Cardiac septum (tissue), 1 donor: ENCODE measurements at regions of chr14 and their contacts with region 1.

Region 1: GRCh38 chr14:50003213-50004031 is 110.5 kb downstream of the ARF6 start:
- DNase-seq: peak; percentile 88

Region 2: DNA sequence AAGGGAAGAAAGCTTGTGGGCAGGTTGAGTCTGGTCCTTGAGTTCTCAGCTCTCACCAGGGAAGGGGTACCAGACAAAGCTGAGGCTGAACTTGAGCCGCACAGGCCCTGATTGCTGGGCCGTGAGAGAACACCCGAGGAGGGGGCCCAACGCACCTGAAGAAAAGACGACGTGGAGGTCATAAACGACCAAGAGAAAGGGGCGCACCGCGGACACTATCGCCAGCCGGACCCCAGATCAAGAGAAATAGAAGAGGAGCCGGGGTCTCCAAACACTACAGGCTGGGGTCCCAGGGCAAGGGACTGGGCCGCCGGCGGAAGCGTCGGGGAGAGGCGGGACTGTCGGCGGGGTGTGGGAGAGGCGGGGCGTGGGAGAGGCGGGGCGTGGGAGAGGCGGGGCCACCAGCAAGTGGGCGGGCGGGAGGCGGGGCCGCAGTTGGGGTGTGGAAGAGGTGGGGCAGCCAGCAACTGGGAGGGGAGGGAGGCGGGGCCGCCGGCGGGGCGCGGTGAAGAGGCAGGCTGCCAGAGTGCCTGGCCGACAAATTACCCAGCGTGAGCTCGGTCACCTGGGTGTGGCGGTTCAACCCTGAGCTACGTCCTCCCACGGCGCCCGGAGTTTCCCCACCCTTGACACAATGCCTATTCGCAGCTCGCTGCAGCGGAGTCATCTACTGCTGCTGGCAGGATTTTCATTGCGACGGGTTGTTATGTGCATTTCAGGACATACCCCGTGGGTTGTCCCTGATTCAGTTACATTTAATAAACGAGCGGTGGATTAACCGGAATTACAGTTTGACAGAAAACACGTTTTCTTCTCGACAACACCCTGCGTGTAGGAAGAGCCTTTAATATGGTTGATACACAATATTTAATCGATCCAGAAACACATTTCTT is 135.3 kb before region 1 on chr14:
- intact Hi-C with region 1: loop called (anchors 5 kb)
- DNase-seq: peak; percentile 99

Region 3: GRCh38 chr14:49892636-49893308 is 110.7 kb before region 1 on chr14 and contains the start of gene ARF6:
- intact Hi-C with region 1: loop called (anchors 1 kb)
- DNase-seq: peak; percentile 100
- total RNA-seq, gene ARF6: 33.2 TPM

Region 4: DNA sequence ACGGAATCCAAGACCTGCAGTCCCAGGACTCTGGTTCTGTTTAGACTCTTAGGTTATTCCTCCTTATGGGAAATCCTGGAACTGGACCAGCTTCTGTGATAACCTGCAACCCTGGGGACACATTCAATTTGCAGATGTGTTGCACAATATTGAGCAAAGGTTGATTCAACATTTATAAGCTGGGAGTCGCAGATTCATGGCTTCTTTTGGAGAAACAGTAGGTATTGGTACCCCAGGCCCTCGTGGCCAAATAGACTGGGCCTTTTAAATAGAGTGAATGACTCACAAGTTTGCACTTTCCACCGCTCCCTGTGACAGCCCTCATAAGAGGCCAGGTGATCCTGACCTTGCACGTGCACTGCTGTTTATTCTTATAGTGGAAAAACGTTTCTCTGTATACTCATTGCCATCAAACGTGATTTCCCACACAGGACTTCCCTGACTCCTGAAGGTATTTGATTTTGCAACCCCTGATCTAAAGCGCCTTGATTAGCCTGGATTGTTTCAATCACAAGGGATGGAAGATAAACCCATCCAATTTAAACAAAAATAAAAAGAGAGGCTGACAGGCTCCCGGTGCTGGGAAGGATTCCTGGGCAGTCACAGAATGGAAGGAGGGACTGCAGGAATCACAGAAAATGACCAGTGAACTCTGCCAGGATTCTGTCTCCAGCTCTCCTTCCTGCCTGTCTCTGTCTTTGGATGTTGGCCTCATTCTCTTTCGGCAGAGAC is 14.9 kb after region 1 on chr14:
- intact Hi-C with region 1: loop called (anchors 2 kb)
- DNase-seq: no peak

Region 5: DNA sequence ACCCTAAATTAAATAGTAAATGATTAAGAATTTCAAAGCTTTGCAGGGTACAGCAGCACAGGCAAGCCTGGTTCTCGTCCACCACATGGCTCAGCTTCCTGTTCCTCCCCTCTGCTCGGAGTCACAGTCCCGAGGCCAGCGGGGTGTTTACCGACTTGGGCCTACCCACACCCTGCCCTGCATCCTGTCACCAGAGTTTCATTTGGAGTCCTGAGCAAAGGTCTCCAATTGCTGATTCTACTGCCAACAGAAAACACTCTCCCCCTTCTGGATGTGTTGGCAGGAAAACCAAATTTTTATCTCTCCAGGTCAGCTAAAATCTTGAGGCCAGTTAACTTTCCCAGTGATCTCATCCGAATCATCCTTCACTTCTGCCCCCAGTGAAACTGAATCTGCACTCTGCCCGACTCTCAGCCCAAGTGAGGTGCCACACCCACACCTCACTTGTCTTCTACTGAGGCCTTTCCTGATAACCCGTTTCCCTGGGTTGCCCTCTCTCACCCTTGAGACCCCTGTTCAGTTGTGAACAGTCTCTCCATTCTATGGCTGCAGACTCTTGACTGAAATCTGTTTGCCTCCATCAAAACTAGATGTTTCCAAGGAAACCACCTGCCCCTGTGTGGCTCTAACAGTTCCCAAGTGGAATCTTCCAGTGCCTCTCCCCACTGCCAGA is 41.8 kb after region 1 on chr14:
- intact Hi-C with region 1: loop called (anchors 5 kb)
- DNase-seq: peak; percentile 90

Region 6: GRCh38 chr14:50101417-50101816 is 98.0 kb after region 1 on chr14:
- intact Hi-C with region 1: loop called (anchors 5 kb)
- DNase-seq: no peak